ENCODE measurements at regions of chr10 and their contacts with region 1.

Region 1: DNA sequence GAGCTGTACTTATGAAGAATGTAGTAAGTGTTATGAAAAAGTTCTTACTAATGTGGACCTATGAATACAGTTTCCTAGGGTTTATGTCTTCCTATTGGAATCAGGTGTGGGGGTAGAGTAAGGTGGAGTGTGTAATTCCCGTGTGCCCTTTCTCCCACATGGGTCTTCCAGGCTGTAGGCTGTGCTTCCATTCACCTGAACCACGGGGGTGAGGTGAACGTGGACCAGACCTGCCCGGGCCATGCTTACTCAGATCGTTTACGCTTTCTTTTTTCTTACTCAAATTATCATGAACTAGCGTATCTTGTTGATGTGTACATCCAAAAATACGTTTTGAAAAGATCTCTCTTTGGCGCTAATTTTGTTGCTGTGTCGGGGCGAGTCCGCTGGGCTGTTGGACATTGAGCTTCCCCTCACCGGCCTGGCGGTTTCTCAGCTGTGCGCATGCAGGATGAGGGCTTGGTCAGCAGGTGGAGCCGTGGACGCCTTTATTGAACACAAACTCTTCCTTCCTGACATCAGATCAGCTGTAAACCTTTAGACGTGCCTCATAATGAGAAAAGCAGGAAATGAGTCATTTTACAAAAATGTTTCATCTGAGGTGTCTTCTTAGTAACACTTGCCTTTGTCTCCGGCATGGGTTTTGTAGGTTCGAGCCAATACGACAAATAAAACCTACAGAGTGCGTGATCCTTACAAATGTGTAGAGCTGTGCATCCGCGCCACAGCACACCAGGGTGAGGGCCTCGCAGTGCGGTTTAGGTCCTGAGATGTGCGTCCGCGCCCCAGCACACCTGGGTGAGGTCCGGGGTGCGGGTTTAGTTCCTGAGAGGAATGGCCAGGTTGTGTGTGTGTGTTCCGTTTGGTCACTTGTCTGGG is 53.8 kb downstream of the WDR37 start:
- DNase-seq: peak; percentile 83
- ATAC-seq: peak; percentile 92
- H3K4me3 Mint-ChIP-seq: no peak overlapping the region
- H3K27ac Mint-ChIP-seq: peak overlapping the region; percentile 4
- H3K4me1 Mint-ChIP-seq: peaks cover 31% of the 10 kb centered on the region
- H3K27me3 Mint-ChIP-seq: no peaks in the 10 kb centered on the region
- CTCF ChIP-seq: peak; percentile 51

Region 2: GRCh38 chr10:1360011-1360557 is 250.1 kb after region 1 on chr10:
- CTCF ChIA-PET with region 1: interaction called, 10 read pairs
- POLR2A ChIA-PET with region 1: no interaction called
- DNase-seq: peak; percentile 76
- ATAC-seq: peak; percentile 71
- H3K4me3 Mint-ChIP-seq: no peak overlapping the region
- H3K27ac Mint-ChIP-seq: no peak overlapping the region; the same call in 1 of the 2 replicates
- H3K4me1 Mint-ChIP-seq: peaks cover 43% of the 10 kb centered on the region
- H3K27me3 Mint-ChIP-seq: no peaks in the 10 kb centered on the region
- CTCF ChIP-seq: peak; percentile 70